ENCODE measurements at regions of chr12 and their contacts with region 1.

Region 1: GRCh38 chr12:76559400-76560085 is at the start of gene OSBPL8:
- DNase-seq: peak; percentile 96
- H3K4me3 Mint-ChIP-seq: peak within 1 kb of the TSS; percentile 92
- H3K27ac Mint-ChIP-seq: peak within 1 kb of the TSS; percentile 96
- H3K4me1 Mint-ChIP-seq: peaks cover 34% of the 10 kb centered on the region
- H3K27me3 Mint-ChIP-seq: no peaks in the 10 kb centered on the region
- total RNA-seq, gene OSBPL8: 56.8 to 63.7 TPM

Region 2: DNA sequence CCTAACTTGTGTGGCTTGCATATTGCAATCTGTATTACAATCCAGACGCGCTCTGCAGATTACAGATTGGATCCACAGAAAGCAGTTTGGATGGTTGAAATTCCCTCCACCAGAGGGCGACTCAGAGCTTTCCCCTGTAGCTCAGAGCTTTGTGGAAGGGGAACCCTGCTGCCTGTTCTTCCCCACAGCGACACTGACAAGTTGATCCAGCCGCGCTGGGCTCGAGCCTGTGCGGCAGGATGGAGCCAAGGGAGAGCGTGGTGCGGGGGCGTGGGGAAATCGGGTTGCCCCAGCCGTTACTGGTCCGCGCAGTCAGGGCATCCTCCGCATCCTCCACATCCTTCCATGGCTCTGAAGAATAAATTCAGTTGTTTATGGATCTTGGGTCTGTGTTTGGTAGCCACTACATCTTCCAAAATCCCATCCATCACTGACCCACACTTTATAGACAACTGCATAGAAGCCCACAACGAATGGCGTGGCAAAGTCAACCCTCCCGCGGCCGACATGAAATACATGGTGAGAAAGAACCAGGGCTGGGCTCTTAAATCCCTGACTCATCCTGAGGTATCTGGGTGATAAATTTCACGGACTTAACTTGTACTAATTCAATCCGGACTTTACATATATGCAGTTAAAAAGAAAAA is 1225.0 kb before region 1 on chr12 and contains the start of gene GLIPR1L1:
- CTCF ChIA-PET with region 1: no interaction called
- intact Hi-C with region 1: loop called (anchors 10 kb)
- DNase-seq: peak; percentile 92
- H3K4me3 Mint-ChIP-seq: peak within 1 kb of the TSS; percentile 44
- H3K27ac Mint-ChIP-seq: no peak within 1 kb of the TSS
- H3K4me1 Mint-ChIP-seq: peaks cover 18% of the 10 kb centered on the region
- H3K27me3 Mint-ChIP-seq: peaks cover 32% of the 10 kb centered on the region
- total RNA-seq, gene GLIPR1L1: not detected

Region 3: DNA sequence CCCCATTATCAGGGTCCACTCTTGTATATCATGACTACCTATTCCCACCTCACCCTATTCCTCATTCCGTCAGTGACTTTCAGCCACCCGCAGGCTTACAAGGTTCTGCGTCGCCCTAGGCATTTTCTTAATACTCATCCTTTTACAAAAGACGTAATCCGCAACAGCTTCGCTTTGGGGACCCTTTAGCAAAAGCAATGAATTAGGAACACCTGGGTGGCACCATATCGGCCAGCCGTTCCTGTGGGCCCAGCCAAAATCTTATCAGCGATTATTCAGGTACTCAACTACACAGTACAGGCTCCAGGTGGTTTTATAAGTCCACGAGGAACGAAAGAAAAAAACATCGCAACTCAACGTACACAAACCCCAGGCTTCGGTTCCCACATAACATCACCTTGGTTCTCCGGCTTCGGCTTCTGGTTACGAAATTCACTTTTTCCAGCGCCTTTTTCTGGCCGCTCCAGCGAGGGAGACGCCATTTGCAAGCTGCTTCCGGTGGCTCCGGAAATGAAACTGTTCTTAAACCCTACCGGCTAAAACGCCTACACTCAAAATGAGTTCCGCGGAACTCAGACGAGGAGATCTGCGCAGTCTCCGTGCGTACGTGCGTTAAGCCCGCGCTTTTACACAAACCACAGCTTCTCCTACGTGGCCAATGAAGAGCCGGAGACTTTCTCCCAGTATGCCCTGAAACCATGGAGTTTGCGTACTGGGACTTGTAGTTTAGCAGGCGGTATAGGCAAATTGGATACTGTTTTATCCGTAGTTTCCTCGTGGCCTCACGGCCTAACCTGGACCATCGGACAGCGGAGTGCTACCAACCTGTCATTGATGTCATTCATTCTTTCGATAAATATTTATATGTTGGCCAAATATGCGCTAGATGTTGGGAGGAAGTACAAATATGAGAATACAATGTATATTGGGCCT is 1048.2 kb before region 1 on chr12 and contains the start of gene KRR1:
- CTCF ChIA-PET with region 1: no interaction called
- intact Hi-C with region 1: loop called (anchors 1 kb)
- DNase-seq: peak; percentile 95
- H3K4me3 Mint-ChIP-seq: peak within 1 kb of the TSS; percentile 95
- H3K27ac Mint-ChIP-seq: peak within 1 kb of the TSS; percentile 98
- H3K4me1 Mint-ChIP-seq: peaks cover 29% of the 10 kb centered on the region
- H3K27me3 Mint-ChIP-seq: no peaks in the 10 kb centered on the region
- total RNA-seq, gene KRR1: 81.1 to 83.9 TPM

Region 4: GRCh38 chr12:76274420-76275083 is 285.0 kb before region 1 on chr12:
- CTCF ChIA-PET with region 1: no interaction called
- intact Hi-C with region 1: loop called (anchors 5 kb)
- DNase-seq: peak; percentile 58
- H3K4me3 Mint-ChIP-seq: no peak overlapping the region
- H3K27ac Mint-ChIP-seq: peak overlapping the region; percentile 10
- H3K4me1 Mint-ChIP-seq: peaks cover 12% of the 10 kb centered on the region
- H3K27me3 Mint-ChIP-seq: peaks cover 11% of the 10 kb centered on the region

Region 5: GRCh38 chr12:76519538-76519937 is 40.0 kb before region 1 on chr12:
- CTCF ChIA-PET with region 1: no interaction called
- intact Hi-C with region 1: loop called (anchors 2 kb)
- DNase-seq: peak; percentile 66
- H3K4me3 Mint-ChIP-seq: no peak overlapping the region
- H3K27ac Mint-ChIP-seq: peak overlapping the region; percentile 32
- H3K4me1 Mint-ChIP-seq: peaks cover 47% of the 10 kb centered on the region
- H3K27me3 Mint-ChIP-seq: no peaks in the 10 kb centered on the region

Region 6: DNA sequence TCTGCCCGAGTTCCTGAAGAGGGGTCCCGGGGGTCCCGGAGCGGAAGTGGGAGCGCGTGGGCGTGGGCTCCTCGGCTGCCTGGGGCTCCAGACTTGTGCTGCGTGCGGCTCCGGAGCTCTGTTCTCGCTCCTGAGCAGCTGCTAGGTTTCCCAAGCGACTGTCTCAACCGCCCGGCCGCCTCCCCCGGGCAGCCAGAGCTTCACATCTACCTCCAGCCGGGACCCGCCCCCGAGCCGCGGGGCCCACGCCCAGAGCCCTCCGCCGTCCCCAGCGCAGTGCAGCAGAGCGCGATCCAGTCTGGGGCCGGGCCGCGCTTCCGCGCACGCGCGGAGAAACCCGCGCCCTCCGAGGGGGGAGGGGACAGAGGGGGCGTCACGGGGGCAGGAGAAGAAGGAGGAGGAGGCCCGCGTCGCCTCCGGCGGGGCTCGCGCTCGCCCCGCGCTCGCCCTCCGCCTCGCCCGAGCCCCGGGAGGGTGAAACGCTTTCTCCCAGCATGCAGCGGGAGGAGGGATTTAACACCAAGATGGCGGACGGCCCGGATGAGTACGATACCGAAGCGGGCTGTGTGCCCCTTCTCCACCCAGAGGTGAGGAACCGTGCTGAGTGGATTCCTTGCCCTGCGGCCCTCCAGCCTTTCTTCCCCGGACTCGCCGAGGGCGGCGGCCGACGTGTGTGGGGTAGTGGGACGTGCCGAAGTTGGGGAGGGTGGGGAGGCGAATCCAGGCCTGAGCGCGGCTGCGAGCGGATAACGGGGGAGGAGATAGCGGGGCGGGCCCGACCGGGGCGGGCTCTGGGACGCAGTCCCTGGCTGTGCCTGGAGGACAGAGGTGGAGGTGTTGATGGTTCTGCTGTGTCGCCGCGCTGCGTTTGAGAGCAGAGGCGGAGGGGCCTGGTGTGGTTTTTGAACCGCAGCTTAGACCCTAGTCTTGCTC is 204.5 kb after region 1 on chr12 and contains the start of gene ZDHHC17:
- CTCF ChIA-PET with region 1: no interaction called
- intact Hi-C with region 1: loop called (anchors 1 kb)
- DNase-seq: peak; percentile 88
- H3K4me3 Mint-ChIP-seq: peak within 1 kb of the TSS; percentile 98
- H3K27ac Mint-ChIP-seq: peak within 1 kb of the TSS; percentile 91
- H3K4me1 Mint-ChIP-seq: peaks cover 38% of the 10 kb centered on the region
- H3K27me3 Mint-ChIP-seq: no peaks in the 10 kb centered on the region
- total RNA-seq, gene ZDHHC17: 19.1 to 22.2 TPM

Region 7: DNA sequence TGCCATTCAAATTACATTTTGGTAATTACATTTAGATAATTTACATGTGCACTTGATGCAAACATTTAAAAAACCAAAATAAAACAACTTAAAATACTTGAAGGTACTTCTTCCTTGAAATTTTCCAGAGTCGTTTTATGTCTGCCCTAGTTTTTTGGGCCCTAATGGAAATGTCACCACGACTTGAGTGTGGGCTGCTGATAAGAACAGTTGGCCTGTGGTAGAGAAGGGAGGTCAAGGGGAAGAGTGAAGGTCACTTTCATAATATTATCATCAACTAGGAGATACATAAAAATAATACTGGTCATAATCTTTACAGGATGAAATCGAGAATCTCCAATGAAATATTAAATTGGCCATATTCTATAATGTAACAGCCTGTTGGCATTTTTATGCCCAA is 227.4 kb after region 1 on chr12:
- CTCF ChIA-PET with region 1: no interaction called
- intact Hi-C with region 1: no loop called
- DNase-seq: no peak
- H3K4me3 Mint-ChIP-seq: no peak overlapping the region
- H3K27ac Mint-ChIP-seq: no peak overlapping the region
- H3K4me1 Mint-ChIP-seq: peaks cover 35% of the 10 kb centered on the region
- H3K27me3 Mint-ChIP-seq: no peaks in the 10 kb centered on the region

Region 8: DNA sequence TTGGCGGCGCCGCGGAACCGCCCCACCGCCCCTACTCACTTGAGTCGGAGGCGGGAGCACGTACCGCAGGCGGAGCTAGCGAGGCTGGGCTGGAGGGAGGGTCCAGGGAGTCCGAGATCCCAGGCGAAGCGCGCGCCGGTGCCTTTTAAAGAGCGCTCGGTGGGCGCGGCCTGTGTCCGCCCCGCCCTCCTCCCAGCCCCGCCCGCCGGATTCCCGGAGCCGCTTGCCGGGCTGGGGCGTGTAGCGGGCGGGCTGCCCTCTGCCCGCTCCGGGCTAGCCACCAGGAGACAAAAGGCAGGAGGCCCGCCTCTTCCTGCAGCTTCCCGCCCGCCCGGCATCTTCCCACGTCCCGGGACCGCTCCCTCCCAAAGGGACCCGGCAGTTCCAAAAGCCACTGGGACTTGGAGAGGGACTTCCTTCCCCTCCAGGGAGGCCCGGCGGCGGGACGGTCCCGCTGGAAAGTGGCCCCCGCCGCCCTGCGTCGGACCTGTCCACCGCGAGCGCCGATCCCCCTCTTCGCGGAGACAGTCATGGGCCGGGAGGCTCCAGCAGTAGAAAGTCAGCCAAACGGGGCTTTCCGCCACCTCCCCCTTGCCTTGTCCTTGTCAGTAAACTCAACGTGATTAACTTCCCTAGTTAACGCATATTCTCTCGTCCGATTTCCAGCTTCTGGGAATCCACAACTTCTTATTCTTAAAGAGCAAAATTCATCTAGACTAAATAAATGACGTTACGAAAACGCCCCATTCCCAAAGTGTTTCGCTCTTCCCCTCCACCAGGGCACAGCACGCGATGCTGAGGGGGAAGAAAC is 319.6 kb after region 1 on chr12 and contains the start of gene CSRP2:
- CTCF ChIA-PET with region 1: no interaction called
- intact Hi-C with region 1: loop called (anchors 1 kb)
- DNase-seq: peak; percentile 80
- H3K4me3 Mint-ChIP-seq: peak within 1 kb of the TSS; percentile 87
- H3K27ac Mint-ChIP-seq: peak within 1 kb of the TSS; percentile 50
- H3K4me1 Mint-ChIP-seq: peaks cover 3% of the 10 kb centered on the region
- H3K27me3 Mint-ChIP-seq: peaks cover 36% of the 10 kb centered on the region
- total RNA-seq, gene CSRP2: 0.62 to 0.86 TPM